Spleen (tissue), 13 donors: ENCODE measurements at regions of chr11 and their contacts with region 1.

Region 1: GRCh38 chr11:67507864-67508485 is at the start of gene CDK2AP2:
- DNase-seq: peak; percentile 100
- H3K4me3 ChIP-seq: peak within 1 kb of the TSS; percentile 63 to 97 (median 86)
- H3K27ac ChIP-seq: peak within 1 kb of the TSS; percentile 97 to 100 (median 98)
- H3K4me1 ChIP-seq: peaks cover 32 to 59% (median 53%) of the 10 kb centered on the region in 6 donors
- H3K27me3 ChIP-seq: peaks cover 0 to 35% (median 0%) of the 10 kb centered on the region in 7 donors
- CTCF ChIP-seq: peak in 5 of 11 experiments; percentile 15 to 44 (median 28)
- POLR2A ChIP-seq: peak in 2 of 3 donors; percentile 83 to 93
- total RNA-seq, gene CDK2AP2: 32.9 to 49.9 (median 40.9) TPM

Region 2: GRCh38 chr11:67396587-67397389 is 111.2 kb before region 1 on chr11:
- intact Hi-C with region 1: loop called (anchors 5 kb)
- DNase-seq: peak; percentile 75
- H3K4me3 ChIP-seq: no peak overlapping the region
- H3K27ac ChIP-seq: peak overlapping the region in 7 of 8 donors; percentile 11 to 75 (median 37)
- H3K4me1 ChIP-seq: peaks cover 37 to 89% (median 62%) of the 10 kb centered on the region in 6 donors
- H3K27me3 ChIP-seq: no peaks in the 10 kb centered on the region
- CTCF ChIP-seq: no peak
- POLR2A ChIP-seq: no peak

Region 3: GRCh38 chr11:67409261-67409666 is 98.7 kb before region 1 on chr11:
- intact Hi-C with region 1: no loop called
- DNase-seq: peak; percentile 95
- H3K4me3 ChIP-seq: peak overlapping the region in 7 of 8 donors; percentile 30 to 75 (median 42)
- H3K27ac ChIP-seq: peak overlapping the region; percentile 38 to 99 (median 96)
- H3K4me1 ChIP-seq: peaks cover 37 to 99% (median 90%) of the 10 kb centered on the region in 6 donors
- H3K27me3 ChIP-seq: peaks cover 0 to 41% (median 0%) of the 10 kb centered on the region in 7 donors
- CTCF ChIP-seq: no peak
- POLR2A ChIP-seq: peak in 1 of 3 donors; percentile 25